PC-9 (cell line): ENCODE measurements at regions of chr1 and their contacts with region 1.

Region 1: DNA sequence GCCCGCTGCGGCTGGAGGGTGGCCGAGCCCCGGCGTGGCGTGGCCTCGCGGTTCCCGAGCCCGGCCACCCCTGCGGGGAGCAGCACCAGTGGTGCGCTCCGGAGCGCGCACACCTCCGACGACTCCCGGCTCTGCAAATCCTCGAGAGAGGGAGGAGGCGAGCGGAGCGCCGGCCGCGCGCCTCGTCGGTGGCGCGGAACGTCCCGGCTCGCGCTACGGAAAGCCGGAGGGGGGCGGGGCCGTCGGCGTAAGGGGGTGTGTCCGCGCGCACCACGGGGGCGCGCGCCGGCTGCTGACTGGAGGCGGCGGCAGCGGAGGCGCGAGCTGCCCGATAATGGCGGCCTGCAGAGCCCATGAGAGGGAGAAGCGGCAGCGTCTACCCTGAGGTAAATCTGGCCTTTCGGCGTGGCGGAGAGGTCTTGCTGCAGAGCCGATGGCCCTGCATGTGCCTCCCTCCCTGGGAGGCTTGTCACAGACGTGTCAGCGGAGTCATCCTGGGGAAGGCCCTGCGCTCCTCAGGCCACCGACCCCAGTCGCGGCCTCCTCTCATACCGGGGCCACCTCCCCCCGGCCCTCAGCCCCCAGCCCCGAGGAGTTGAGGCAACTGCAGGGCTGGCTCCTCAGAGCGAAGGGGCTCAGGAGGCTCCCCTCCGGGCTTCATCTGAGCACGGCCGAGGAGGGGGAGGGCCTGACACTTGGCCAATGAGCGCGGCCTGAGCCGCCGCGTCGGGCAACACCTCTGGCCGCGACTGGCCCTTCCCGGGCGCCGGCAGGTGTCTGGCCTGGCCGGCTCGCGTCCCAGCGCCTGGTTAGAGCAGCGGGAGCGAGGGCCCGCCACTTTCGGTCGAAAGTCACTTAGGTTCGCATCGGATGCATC is at the start of gene PDIK1L:
- DNase-seq: peak; percentile 81 to 92
- H3K4me3 ChIP-seq: peak within 1 kb of the TSS; percentile 80
- H3K27ac ChIP-seq: peak within 1 kb of the TSS; percentile 58
- H3K4me1 ChIP-seq: peaks cover 24% of the 10 kb centered on the region
- H3K27me3 ChIP-seq: no peaks in the 10 kb centered on the region
- CTCF ChIP-seq: no peak
- total RNA-seq, gene PDIK1L: 7.6 and 8.4 TPM in 2 replicates

Region 2: GRCh38 chr1:26126321-26127084 is 14.7 kb after region 1 on chr1:
- CTCF ChIA-PET with region 1: interaction called, 4 read pairs
- POLR2A ChIA-PET with region 1: interaction called, 12 read pairs
- intact Hi-C with region 1: loop called (anchors 1 kb)
- DNase-seq: peak; percentile 67 to 97
- H3K4me3 ChIP-seq: peak overlapping the region; percentile 32; the same call in 1 of the 2 replicates
- H3K27ac ChIP-seq: peak overlapping the region; percentile 95
- H3K4me1 ChIP-seq: peaks cover 62% of the 10 kb centered on the region
- H3K27me3 ChIP-seq: no peaks in the 10 kb centered on the region
- CTCF ChIP-seq: no peak

Region 3: DNA sequence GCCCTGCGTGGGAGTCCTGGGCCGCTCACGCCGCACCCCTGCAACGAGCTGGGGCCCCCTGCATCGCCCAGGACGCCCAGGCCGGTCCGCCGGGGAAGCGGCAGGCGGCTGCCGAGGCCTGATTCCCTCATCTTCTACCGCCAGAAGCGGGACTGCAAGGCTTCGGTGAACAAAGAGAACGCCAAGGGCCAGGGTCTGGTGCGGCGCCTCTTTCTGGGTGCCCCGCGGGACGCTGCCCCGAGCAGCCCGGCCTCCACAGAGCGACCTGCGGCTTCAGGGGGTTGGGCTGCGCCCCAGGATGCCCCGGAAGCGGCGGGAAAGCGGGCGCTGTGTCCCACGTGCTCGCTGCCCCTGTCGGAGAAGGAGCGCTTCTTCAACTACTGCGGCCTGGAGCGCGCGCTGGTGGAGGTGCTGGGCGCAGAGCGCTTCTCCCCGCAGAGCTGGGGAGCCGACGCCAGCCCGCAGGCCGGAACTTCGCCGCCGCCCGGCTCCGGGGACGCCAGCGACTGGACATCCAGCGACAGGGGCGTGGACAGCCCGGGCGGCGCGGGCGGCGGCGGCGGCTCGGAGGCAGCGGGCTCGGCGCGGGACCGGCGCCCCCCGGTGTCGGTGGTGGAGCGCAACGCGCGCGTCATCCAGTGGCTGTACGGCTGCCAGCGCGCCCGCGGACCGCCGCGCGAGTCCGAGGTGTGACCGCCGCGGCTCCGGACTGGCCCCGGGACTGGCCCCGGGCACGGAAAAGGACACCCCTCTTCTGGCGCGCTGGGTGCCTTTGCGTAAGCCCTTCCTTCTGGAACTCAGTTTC is 49.8 kb after region 1 on chr1:
- CTCF ChIA-PET with region 1: no interaction called
- POLR2A ChIA-PET with region 1: no interaction called
- intact Hi-C with region 1: loop called (anchors 5 kb)
- DNase-seq: peak in 1 of 2 experiments; percentile 70
- H3K4me3 ChIP-seq: peak overlapping the region; percentile 56; the same call in 1 of the 2 replicates
- H3K27ac ChIP-seq: no peak overlapping the region
- H3K4me1 ChIP-seq: peaks cover 3% of the 10 kb centered on the region; the same call in 1 of the 2 replicates
- H3K27me3 ChIP-seq: peaks cover 18% of the 10 kb centered on the region
- CTCF ChIP-seq: no peak